ENCODE measurements at regions of chr10 and their contacts with region 1.

Region 1: DNA sequence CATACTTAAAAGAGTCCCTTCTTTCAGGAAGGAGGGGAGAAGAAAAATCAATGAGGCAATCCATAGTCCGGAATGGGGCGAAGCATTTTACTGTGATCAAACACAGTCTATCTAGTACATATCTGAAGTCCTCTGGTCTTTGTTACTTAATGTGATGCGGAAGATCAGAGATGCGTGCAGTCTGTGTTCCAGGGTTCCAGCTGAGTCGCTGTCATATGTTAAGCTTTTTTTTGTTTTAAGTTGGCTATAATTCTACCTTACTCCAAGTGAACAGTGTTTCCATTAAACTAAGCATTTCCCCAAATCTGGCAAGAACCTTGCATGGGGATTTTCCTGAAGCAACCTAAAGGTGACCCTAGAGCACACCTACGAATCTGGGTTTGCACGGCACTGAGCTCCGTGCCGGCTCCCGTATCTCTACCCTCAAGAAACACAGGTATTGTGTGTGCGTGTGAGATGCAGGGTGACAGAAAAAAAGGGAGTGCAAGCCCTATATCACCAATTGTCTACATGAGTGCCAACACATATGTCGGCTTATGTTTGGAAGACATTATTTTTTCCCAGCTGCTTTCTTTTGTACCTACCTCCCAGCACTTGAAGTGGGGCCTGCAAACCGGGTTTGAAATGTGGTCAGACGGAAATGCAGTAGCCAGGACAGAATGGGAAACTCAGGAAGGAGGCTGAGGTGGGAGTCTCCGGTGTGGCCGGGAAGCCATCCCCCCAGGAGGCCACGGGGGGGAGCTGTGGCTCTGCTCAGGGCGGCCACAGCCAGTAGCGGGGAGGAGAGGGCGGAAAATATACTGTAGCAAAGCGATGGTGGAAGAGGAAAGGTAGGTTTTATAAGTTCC is 435.8 kb upstream of the MGMT start:
- DNase-seq: peak; percentile 50 to 71 (median 66)
- ATAC-seq: peak; percentile 96
- H3K4me3 ChIP-seq: no peak overlapping the region
- H3K27ac ChIP-seq: no peak overlapping the region
- H3K4me1 ChIP-seq: no peaks in the 10 kb centered on the region
- H3K27me3 ChIP-seq: peaks cover 3 to 34% of the 10 kb centered on the region in 2 experiments
- CTCF ChIP-seq: peak; percentile 74 to 84 (median 77)
- EP300 ChIP-seq: no peak
- POLR2A ChIP-seq: no peak
- RAD21 ChIP-seq: peak; percentile 56 to 76

Region 2: DNA sequence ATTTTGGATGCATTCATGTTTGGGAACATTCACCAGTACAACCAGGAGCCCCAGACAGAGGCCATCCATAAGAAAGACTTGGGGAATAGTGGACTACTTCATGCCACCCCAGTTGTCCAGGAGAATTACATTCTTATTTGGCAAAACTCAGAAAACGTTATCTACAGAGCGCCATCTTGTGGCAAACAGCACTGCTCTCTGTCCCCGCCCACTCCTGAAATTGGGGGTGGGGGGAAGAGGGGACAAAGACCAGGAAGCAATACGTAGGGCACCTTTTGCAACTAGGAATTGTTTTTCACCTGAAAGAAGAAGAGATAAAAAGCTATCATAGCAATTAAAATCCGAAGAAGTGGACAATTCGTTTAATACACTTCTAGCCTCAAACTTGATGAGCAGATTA is 301.3 kb after region 1 on chr10:
- CTCF ChIA-PET with region 1: interaction called, 3 read pairs
- POLR2A ChIA-PET with region 1: interaction called, 3 read pairs
- in situ Hi-C with region 1: no loop called
- intact Hi-C with region 1: loop called (anchors 1 kb)
- DNase-seq: peak; percentile 41 to 51 (median 44)
- ATAC-seq: peak; percentile 69
- H3K4me3 ChIP-seq: no peak overlapping the region
- H3K27ac ChIP-seq: no peak overlapping the region
- H3K4me1 ChIP-seq: no peaks in the 10 kb centered on the region
- H3K27me3 ChIP-seq: peaks cover 0 to 5% of the 10 kb centered on the region in 2 experiments; a peak in 1 of 5 replicates
- CTCF ChIP-seq: peak; percentile 50 to 61 (median 50)
- EP300 ChIP-seq: no peak
- POLR2A ChIP-seq: no peak
- RAD21 ChIP-seq: peak in 1 of 2 experiments; percentile 41; a peak in 2 of 4 replicates

Measured in K562 (cell line).